Thyroid gland (tissue), 4 donors: ENCODE measurements at regions of chr22 and their contacts with region 1.

Region 1: DNA sequence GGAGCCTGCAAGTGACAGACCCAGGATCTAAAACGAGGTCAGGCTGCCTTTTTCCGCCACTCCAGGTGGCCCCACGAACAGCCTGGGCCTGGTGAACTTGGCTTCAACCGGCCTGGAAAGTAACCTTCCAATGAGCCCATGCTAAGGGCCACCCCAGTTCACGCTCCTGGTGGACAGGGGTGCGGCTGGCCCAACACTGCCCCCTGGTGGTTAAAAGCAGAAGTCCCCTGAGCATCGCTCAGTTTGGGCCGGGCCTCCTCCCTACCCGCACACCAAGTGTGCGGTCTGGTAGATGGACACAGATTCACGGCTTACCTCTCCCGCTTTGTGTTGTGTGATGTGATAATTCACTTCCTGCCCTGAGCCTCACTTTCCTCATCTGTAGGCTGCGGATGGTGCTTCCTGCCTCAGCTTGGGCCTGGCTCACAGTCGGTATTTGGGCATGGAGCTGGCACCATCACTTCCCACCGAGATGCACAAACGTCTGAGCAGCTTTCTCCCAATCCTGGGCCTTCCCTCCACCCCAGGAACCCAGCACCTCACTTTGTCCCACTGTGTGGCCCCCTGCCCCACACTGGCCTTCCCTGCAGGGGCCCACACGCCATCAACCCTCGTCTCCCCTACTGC is 13.7 kb upstream of the SEC14L3 start:
- DNase-seq: peak; percentile 57 to 66
- H3K4me3 ChIP-seq: no peak overlapping the region
- H3K27ac ChIP-seq: no peak overlapping the region
- H3K4me1 ChIP-seq: no peaks in the 10 kb centered on the region
- H3K27me3 ChIP-seq: no peaks in the 10 kb centered on the region
- CTCF ChIP-seq: peak; percentile 87 to 98 (median 93)
- POLR2A ChIP-seq: no peak

Region 2: GRCh38 chr22:30444632-30445437 is 40.6 kb before region 1 on chr22:
- intact Hi-C with region 1: loop called (anchors 5 kb)
- DNase-seq: peak; percentile 39 to 44
- H3K4me3 ChIP-seq: no peak overlapping the region
- H3K27ac ChIP-seq: no peak overlapping the region
- H3K4me1 ChIP-seq: no peaks in the 10 kb centered on the region
- H3K27me3 ChIP-seq: no peaks in the 10 kb centered on the region
- CTCF ChIP-seq: peak; percentile 29 to 75 (median 68)
- POLR2A ChIP-seq: no peak